Caco-2 (cell line): ENCODE measurements at regions of chr1 and their contacts with region 1.

Region 1: DNA sequence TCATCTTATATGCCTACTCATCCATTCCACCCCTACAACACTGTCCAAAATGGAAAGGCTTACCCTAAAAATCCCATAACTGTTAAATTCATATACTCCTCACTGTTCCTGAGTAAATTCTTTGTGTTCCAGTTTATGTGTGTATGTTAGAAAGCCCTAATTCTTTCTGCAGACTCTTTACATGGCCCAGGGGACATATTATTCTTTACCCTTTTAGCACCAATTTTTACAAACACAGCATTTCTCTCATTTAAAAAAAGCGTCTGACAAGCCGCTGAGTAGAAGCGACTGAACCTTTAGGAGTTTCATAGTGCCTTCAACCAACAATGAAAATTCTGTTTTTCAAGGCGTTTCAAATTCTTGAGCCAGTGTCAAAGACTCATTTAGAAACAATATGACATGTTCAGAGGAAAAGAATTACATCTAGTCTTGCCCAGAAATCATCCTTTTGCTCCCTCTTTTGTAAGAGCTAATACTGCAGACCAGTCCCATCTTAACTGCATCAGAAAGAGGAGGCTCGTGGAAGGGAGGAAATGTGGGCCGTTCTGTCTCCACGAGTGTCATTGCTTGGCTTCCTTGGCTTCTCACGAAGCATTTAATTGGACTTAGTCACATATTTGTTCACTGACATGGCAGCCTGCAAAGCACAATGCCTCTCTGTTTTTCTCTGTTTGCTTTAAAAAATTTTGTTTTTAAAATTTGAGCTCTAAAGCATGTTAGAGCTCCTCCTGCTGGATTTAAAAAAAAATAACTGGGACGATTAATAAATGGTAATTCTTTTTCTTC is 21.3 kb upstream of the C1orf105 start:
- DNase-seq: peak; percentile 45 to 47
- H3K4me3 ChIP-seq: no peak overlapping the region
- H3K4me3 Mint-ChIP-seq: no peak overlapping the region
- H3K27ac Mint-ChIP-seq: peak overlapping the region; percentile 15
- H3K4me1 ChIP-seq: peaks cover 15% of the 10 kb centered on the region
- H3K4me1 Mint-ChIP-seq: peaks cover 26% of the 10 kb centered on the region
- H3K27me3 ChIP-seq: no peaks in the 10 kb centered on the region
- H3K27me3 Mint-ChIP-seq: no peaks in the 10 kb centered on the region
- CTCF ChIP-seq: peak; percentile 47 to 51

Region 2: GRCh38 chr1:172002725-172003345 is 396.3 kb before region 1 on chr1:
- CTCF ChIA-PET with region 1: interaction called, 9 read pairs
- POLR2A ChIA-PET with region 1: no interaction called
- intact Hi-C with region 1: loop called (anchors 1 kb)
- DNase-seq: peak; percentile 32 to 51
- H3K4me3 ChIP-seq: no peak overlapping the region
- H3K4me3 Mint-ChIP-seq: no peak overlapping the region
- H3K27ac Mint-ChIP-seq: no peak overlapping the region
- H3K4me1 ChIP-seq: peaks cover 13% of the 10 kb centered on the region
- H3K4me1 Mint-ChIP-seq: no peaks in the 10 kb centered on the region
- H3K27me3 ChIP-seq: no peaks in the 10 kb centered on the region
- H3K27me3 Mint-ChIP-seq: no peaks in the 10 kb centered on the region
- CTCF ChIP-seq: peak; percentile 67 to 69

Region 3: GRCh38 chr1:172041742-172042141 is 357.4 kb before region 1 on chr1:
- CTCF ChIA-PET with region 1: no interaction called
- POLR2A ChIA-PET with region 1: no interaction called
- intact Hi-C with region 1: loop called (anchors 1 kb)
- DNase-seq: no peak
- H3K4me3 ChIP-seq: no peak overlapping the region
- H3K4me3 Mint-ChIP-seq: no peak overlapping the region
- H3K27ac Mint-ChIP-seq: no peak overlapping the region
- H3K4me1 ChIP-seq: 0 out of 2 replicates have a peak, but pooled peaks cover 4% of the 10 kb centered on the region
- H3K4me1 Mint-ChIP-seq: no peaks in the 10 kb centered on the region
- H3K27me3 ChIP-seq: no peaks in the 10 kb centered on the region
- H3K27me3 Mint-ChIP-seq: peaks cover 6% of the 10 kb centered on the region
- CTCF ChIP-seq: peak; percentile 37 to 46

Region 4: DNA sequence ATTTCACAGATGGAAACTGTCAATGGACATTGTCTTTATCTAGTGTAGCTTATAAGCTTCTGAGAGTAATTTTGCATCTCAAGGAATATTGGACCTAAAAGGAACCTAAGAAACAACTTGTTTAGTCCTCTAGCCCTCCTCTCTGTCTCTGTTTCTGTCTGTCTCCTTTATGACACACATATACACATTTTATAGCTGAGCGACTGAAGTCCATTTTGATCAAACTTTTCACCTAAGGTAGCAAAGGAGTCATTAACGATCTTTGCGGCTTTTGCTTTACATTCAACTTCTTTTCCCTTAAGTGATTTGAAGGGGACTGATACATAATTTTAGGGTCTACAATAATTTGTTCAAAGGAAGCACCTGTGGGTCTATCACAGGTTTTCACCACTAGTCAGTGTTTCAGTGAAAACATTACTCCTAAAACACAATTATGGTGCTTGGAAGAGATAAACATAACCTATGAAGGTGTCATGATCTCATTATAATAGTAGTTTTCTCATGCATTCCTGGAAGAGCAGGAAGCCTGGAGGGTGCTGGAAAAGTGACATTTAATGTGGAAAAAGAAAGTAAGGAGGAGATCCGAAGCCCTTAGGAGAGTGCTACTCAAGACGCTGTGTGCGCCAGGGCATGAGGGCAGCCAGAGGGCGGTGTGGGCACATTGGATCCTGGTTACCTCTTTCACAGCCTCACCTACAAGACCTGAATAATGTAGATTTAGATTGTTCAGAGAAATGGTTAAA is 309.2 kb before region 1 on chr1:
- CTCF ChIA-PET with region 1: no interaction called
- POLR2A ChIA-PET with region 1: no interaction called
- intact Hi-C with region 1: loop called (anchors 1 kb)
- DNase-seq: peak; percentile 41 to 50
- H3K4me3 ChIP-seq: no peak overlapping the region
- H3K4me3 Mint-ChIP-seq: no peak overlapping the region
- H3K27ac Mint-ChIP-seq: no peak overlapping the region
- H3K4me1 ChIP-seq: no peaks in the 10 kb centered on the region
- H3K4me1 Mint-ChIP-seq: no peaks in the 10 kb centered on the region
- H3K27me3 ChIP-seq: no peaks in the 10 kb centered on the region
- H3K27me3 Mint-ChIP-seq: peaks cover 7% of the 10 kb centered on the region
- CTCF ChIP-seq: peak; percentile 57 to 70

Region 5: DNA sequence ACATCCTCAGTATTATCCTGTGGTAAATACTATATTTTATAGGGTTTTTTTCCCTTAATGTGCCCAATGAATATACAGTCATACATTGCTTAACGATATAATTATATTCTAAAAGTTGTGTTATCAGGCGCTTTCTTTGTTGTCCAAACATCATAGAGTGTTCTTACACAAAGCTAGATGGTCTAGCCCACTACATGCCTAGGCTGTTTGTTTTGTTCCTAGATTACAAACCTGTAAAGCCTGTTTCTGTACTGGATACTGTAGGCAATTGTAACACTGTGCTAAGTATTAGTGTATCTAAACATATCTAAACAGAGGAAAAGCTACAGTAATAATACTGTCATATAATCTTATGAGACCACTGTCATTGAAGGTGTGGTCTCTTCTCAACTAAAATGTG is 221.3 kb before region 1 on chr1:
- CTCF ChIA-PET with region 1: no interaction called
- POLR2A ChIA-PET with region 1: no interaction called
- intact Hi-C with region 1: loop called (anchors 1 kb)
- DNase-seq: peak in 1 of 2 experiments; percentile 49
- H3K4me3 ChIP-seq: no peak overlapping the region
- H3K4me3 Mint-ChIP-seq: no peak overlapping the region
- H3K27ac Mint-ChIP-seq: peak overlapping the region; percentile 12
- H3K4me1 ChIP-seq: peaks cover 48% of the 10 kb centered on the region
- H3K4me1 Mint-ChIP-seq: peaks cover 28% of the 10 kb centered on the region
- H3K27me3 ChIP-seq: no peaks in the 10 kb centered on the region
- H3K27me3 Mint-ChIP-seq: no peaks in the 10 kb centered on the region
- CTCF ChIP-seq: no peak

Region 6: DNA sequence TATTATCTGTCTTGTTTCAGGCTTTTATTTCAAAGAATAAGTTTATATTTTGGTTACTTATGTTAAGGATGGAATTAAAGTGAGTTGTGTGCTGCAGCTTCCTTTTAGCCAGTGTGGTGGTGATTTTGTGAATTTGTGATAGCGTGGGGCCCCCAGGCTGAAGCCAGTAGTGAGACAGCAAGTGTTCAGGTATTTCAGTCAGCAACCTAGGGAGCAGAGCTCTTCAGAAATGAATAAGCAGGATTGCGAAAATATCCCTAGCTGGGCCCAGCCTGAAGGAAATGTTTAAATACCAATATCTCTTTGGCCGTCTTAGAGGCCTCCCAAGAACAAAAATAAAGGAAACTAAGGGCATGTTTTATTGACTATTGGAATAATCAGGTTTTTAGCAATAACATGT is 129.5 kb before region 1 on chr1:
- CTCF ChIA-PET with region 1: no interaction called
- POLR2A ChIA-PET with region 1: no interaction called
- intact Hi-C with region 1: loop called (anchors 5 kb)
- DNase-seq: peak in 1 of 2 experiments; percentile 6
- H3K4me3 ChIP-seq: no peak overlapping the region
- H3K4me3 Mint-ChIP-seq: no peak overlapping the region
- H3K27ac Mint-ChIP-seq: no peak overlapping the region
- H3K4me1 ChIP-seq: no peaks in the 10 kb centered on the region
- H3K4me1 Mint-ChIP-seq: no peaks in the 10 kb centered on the region
- H3K27me3 ChIP-seq: no peaks in the 10 kb centered on the region
- H3K27me3 Mint-ChIP-seq: no peaks in the 10 kb centered on the region
- CTCF ChIP-seq: no peak

Region 7: GRCh38 chr1:172360511-172360910 is 38.7 kb before region 1 on chr1:
- CTCF ChIA-PET with region 1: no interaction called
- POLR2A ChIA-PET with region 1: no interaction called
- intact Hi-C with region 1: loop called (anchors 1 kb)
- DNase-seq: peak; percentile 57 to 80
- H3K4me3 ChIP-seq: no peak overlapping the region
- H3K4me3 Mint-ChIP-seq: peak overlapping the region; percentile 43
- H3K27ac Mint-ChIP-seq: peak overlapping the region; percentile 89
- H3K4me1 ChIP-seq: peaks cover 77% of the 10 kb centered on the region
- H3K4me1 Mint-ChIP-seq: peaks cover 30% of the 10 kb centered on the region
- H3K27me3 ChIP-seq: no peaks in the 10 kb centered on the region
- H3K27me3 Mint-ChIP-seq: no peaks in the 10 kb centered on the region
- CTCF ChIP-seq: no peak